CD8-positive, alpha-beta T cell (primary cell): ENCODE measurements at regions of chr12 and their contacts with region 1.

Region 1: DNA sequence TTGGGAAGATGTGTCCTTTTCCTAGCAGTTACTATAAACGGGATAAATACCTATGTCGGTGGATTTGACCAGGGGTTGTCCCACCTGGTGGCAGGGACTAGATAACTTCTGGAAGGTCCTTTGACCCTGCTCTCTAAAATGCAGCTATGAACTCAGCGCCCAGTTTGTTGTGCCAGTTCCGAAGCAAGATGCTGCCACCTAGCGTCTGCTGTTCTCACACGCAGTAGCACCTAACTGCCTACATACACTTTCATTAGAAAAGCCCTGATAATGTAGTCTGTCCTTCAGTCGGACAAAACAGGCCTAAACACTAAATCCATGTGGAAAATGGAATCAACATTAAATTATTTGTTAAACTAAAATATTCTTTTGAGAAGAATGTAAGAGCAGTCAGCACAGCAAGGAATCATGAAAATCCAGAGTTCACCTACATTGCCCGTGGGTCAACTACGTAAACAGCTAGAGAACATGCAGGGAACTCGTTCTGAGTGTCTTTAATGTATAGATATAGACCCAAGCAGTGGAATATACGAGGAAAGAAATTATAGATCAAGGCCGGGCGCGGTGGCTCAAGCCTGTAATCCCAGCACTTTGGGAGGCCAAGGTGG is 51.1 kb upstream of the CRACR2A start:
- DNase-seq: peak; percentile 39 to 80 (median 73)
- ATAC-seq: peak; percentile 77
- H3K4me3 ChIP-seq: no peak overlapping the region
- H3K4me3 Mint-ChIP-seq: no peak overlapping the region
- H3K27ac ChIP-seq: no peak overlapping the region
- H3K27ac Mint-ChIP-seq: no peak overlapping the region
- H3K4me1 ChIP-seq: no peaks in the 10 kb centered on the region
- H3K4me1 Mint-ChIP-seq: no peaks in the 10 kb centered on the region
- H3K27me3 ChIP-seq: no peaks in the 10 kb centered on the region
- H3K27me3 Mint-ChIP-seq: no peaks in the 10 kb centered on the region
- CTCF ChIP-seq: peak; percentile 77

Region 2: DNA sequence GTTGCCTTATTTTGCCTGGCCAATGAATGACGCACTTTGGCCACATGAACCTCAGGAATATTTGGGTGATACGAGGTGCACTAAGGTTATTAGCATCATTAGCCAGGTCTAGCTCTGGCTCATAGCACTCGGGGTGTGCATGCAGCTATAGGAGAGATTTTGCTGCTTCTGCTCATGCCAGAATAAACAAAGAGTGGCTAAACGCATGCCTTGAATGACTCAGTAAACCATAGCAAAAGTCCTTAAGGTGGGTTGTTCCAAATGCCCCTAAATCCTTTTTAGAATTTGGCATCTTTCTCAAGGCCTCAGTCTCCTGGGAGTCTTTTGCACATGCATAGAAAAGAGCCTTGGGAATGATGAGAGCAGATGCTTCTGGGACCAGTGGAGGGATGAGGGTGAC is 1352.9 kb before region 1 on chr12:
- CTCF ChIA-PET with region 1: no interaction called
- POLR2A ChIA-PET with region 1: no interaction called
- intact Hi-C with region 1: no loop called
- DNase-seq: no peak
- ATAC-seq: no peak
- H3K4me3 ChIP-seq: no peak overlapping the region
- H3K4me3 Mint-ChIP-seq: no peak overlapping the region
- H3K27ac ChIP-seq: no peak overlapping the region
- H3K27ac Mint-ChIP-seq: no peak overlapping the region
- H3K4me1 ChIP-seq: no peaks in the 10 kb centered on the region
- H3K4me1 Mint-ChIP-seq: no peaks in the 10 kb centered on the region
- H3K27me3 ChIP-seq: no peaks in the 10 kb centered on the region
- H3K27me3 Mint-ChIP-seq: peaks cover under 1% of the 10 kb centered on the region
- CTCF ChIP-seq: no peak

Region 3: GRCh38 chr12:2547273-2548044 is 1256.5 kb before region 1 on chr12:
- CTCF ChIA-PET with region 1: no interaction called
- POLR2A ChIA-PET with region 1: no interaction called
- intact Hi-C with region 1: no loop called
- DNase-seq: peak in 1 of 9 experiments; percentile 17
- ATAC-seq: no peak
- H3K4me3 ChIP-seq: no peak overlapping the region
- H3K4me3 Mint-ChIP-seq: no peak overlapping the region
- H3K27ac ChIP-seq: no peak overlapping the region
- H3K27ac Mint-ChIP-seq: no peak overlapping the region
- H3K4me1 ChIP-seq: no peaks in the 10 kb centered on the region
- H3K4me1 Mint-ChIP-seq: no peaks in the 10 kb centered on the region
- H3K27me3 ChIP-seq: no peaks in the 10 kb centered on the region
- H3K27me3 Mint-ChIP-seq: peaks cover 11% of the 10 kb centered on the region
- CTCF ChIP-seq: no peak

Region 4: DNA sequence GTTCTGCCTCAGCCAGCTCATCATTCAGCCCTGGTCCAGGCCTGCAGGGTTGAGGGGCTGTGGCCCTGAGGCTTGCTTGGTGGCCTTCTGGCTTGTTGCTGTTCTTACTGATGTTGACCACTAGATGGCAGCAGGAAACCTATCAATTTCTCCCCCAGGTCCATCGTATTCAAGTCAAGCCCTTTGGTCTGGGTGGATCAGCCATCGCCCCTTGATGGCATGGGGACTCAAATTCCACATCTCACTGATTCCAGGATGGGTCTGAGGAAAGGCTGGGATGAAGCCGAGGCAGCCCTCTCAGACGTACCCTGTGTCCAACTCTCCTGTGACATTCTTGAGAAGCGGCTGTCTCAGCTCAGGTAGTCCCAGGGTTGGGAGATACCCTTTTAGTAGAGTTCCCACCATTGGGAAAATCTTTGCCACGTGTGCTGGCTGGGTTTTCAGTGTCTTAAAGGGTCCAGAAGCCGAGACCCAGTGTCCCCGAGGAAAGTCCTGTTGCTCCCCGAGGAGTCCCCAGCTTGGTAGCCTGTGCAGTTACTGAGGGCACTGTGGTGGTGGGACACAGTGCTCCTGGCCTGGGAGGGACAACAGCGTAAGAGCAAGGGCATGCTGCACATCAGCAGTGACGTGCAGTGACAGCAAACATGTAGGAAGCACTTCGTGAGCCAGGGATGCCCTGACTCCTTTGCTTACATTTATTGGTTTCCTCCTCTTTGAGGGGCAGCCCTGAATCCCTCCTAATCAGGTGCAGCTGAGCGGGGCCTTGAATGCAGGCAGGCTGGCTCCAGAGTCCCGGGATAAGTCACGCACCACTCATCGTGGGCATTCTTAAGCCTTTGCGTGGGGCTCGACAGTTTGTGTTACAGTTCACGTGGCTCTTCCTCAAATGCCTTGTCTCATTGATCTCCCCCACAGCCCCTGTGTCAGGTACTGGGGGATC is 668.2 kb before region 1 on chr12:
- CTCF ChIA-PET with region 1: no interaction called
- POLR2A ChIA-PET with region 1: no interaction called
- intact Hi-C with region 1: loop called in 1 of 2 experiments (anchors 10 kb)
- DNase-seq: peak in 7 of 9 experiments; percentile 3 to 72 (median 34)
- ATAC-seq: peak; percentile 49
- H3K4me3 ChIP-seq: no peak overlapping the region
- H3K4me3 Mint-ChIP-seq: no peak overlapping the region
- H3K27ac ChIP-seq: no peak overlapping the region
- H3K27ac Mint-ChIP-seq: no peak overlapping the region
- H3K4me1 ChIP-seq: no peaks in the 10 kb centered on the region
- H3K4me1 Mint-ChIP-seq: peaks cover 3% of the 10 kb centered on the region
- H3K27me3 ChIP-seq: peaks cover 3 to 5% of the 10 kb centered on the region in 2 experiments
- H3K27me3 Mint-ChIP-seq: peaks cover 50% of the 10 kb centered on the region
- CTCF ChIP-seq: peak; percentile 78

Region 5: GRCh38 chr12:3313675-3314663 is 490.0 kb before region 1 on chr12:
- CTCF ChIA-PET with region 1: interaction called, 17 read pairs
- POLR2A ChIA-PET with region 1: no interaction called
- intact Hi-C with region 1: no loop called
- DNase-seq: peak in 4 of 9 experiments; percentile 25 to 47 (median 32)
- ATAC-seq: no peak
- H3K4me3 ChIP-seq: no peak overlapping the region
- H3K4me3 Mint-ChIP-seq: no peak overlapping the region
- H3K27ac ChIP-seq: no peak overlapping the region
- H3K27ac Mint-ChIP-seq: no peak overlapping the region
- H3K4me1 ChIP-seq: no peaks in the 10 kb centered on the region
- H3K4me1 Mint-ChIP-seq: no peaks in the 10 kb centered on the region
- H3K27me3 ChIP-seq: no peaks in the 10 kb centered on the region
- H3K27me3 Mint-ChIP-seq: no peaks in the 10 kb centered on the region
- CTCF ChIP-seq: no peak

Region 6: DNA sequence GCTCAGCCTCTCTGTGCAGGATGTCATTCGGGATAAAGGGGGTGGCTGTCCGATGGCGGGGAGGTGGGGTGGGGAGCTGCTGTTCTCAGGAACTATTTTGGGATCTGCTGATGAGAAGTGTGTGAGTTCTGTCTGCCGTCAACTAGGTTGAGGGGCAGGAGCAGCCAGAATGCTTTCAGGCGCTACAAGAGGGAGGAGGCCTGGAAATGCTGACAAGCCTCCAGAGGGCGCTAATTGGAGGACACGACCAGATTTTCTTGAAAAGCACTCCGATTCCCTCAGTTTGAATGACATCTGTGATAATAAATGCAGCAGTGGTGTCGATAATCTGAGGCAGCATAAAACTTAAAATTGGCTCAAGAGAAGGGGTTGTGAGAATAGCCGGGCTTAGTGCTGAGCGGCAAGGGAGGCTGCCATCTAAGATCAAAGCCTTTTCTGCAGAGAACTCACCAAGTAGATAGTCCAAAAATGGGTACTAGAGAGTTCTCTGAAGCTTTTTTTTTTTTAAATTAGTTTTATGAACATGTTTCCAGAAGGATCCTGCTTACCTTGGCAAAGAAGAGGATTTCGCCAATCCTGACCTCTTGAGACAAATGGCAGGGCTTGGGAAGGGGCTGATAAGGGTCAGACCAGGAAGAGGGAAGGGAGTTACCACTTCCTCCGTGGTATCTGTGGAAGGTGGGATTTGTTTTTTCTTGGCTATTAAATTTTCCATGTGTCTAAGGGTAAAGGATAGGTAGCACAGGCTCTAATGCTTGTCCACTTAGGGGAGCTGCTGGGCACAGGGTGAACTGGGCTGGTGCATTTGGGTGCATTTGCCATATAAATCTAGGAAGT is 145.4 kb before region 1 on chr12:
- CTCF ChIA-PET with region 1: interaction called, 16 read pairs
- POLR2A ChIA-PET with region 1: no interaction called
- intact Hi-C with region 1: loop called (anchors 1 kb)
- DNase-seq: peak in 7 of 9 experiments; percentile 7 to 60 (median 39)
- ATAC-seq: no peak
- H3K4me3 ChIP-seq: no peak overlapping the region
- H3K4me3 Mint-ChIP-seq: no peak overlapping the region
- H3K27ac ChIP-seq: no peak overlapping the region
- H3K27ac Mint-ChIP-seq: no peak overlapping the region
- H3K4me1 ChIP-seq: no peaks in the 10 kb centered on the region
- H3K4me1 Mint-ChIP-seq: no peaks in the 10 kb centered on the region
- H3K27me3 ChIP-seq: no peaks in the 10 kb centered on the region
- H3K27me3 Mint-ChIP-seq: no peaks in the 10 kb centered on the region
- CTCF ChIP-seq: peak; percentile 38

Region 7: GRCh38 chr12:3777206-3777809 is 26.7 kb before region 1 on chr12:
- CTCF ChIA-PET with region 1: interaction called, 17 read pairs
- POLR2A ChIA-PET with region 1: no interaction called
- intact Hi-C with region 1: no loop called
- DNase-seq: peak in 3 of 9 experiments; percentile 7 to 63 (median 54)
- ATAC-seq: peak; percentile 57
- H3K4me3 ChIP-seq: no peak overlapping the region
- H3K4me3 Mint-ChIP-seq: no peak overlapping the region
- H3K27ac ChIP-seq: no peak overlapping the region
- H3K27ac Mint-ChIP-seq: no peak overlapping the region
- H3K4me1 ChIP-seq: no peaks in the 10 kb centered on the region
- H3K4me1 Mint-ChIP-seq: peaks cover 4% of the 10 kb centered on the region
- H3K27me3 ChIP-seq: no peaks in the 10 kb centered on the region
- H3K27me3 Mint-ChIP-seq: no peaks in the 10 kb centered on the region
- CTCF ChIP-seq: peak; percentile 71